BJ (cell line): ENCODE measurements at regions of chr6 and their contacts with region 1.

Region 1: DNA sequence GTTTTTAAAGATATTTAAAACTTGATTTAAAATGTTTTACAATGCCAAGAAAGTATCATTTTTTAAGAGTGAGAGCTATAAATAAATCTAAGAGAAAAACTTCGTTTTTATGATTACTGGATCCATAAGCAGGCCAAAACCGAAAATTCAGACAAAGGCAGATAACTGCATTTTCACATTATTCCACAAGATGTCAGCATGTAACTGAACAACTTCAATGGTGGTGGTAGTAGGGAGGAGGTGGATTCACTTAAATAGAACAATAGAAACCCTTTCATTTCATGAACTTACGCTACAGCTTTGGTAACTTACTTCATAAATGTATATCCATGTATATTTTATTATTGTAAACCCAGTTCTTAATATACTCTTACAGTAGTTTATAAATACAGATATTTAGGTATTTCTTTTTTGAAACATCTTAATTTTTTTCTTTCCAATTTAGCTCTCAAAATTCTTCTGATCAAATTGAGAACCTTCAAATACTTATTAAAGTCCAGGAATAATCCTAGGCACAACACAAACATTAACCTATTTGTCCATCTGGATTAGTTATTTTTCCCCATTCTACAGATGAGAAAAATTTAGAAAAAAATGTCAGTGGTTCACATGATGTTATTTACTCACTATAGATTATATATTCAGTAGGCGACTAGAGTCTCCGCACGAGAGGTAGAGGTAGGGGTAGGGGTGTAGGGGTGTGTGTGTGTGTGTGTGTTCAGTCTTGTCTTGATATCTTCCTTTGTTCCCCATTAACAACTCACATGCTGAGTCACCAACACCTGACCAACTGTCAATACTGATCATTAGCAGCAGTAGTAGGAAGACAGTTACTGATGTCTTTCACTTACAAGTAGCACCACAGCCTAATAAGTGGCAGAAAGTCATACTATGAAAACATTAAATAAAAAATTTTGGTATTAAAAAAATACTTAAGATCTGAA is 111.5 kb downstream of the ARHGAP18 start:
- DNase-seq: no peak
- H3K4me3 ChIP-seq: no peak overlapping the region
- H3K27me3 ChIP-seq: no peaks in the 10 kb centered on the region
- CTCF ChIP-seq: peak; percentile 62

Region 2: GRCh38 chr6:129525055-129525454 is 73.5 kb before region 1 on chr6:
- CTCF ChIA-PET with region 1: no interaction called
- POLR2A ChIA-PET with region 1: no interaction called
- DNase-seq: no peak
- H3K4me3 ChIP-seq: no peak overlapping the region
- H3K27me3 ChIP-seq: no peaks in the 10 kb centered on the region
- CTCF ChIP-seq: no peak

Region 3: GRCh38 chr6:129621247-129621646 is 22.7 kb after region 1 on chr6:
- CTCF ChIA-PET with region 1: no interaction called
- POLR2A ChIA-PET with region 1: no interaction called
- DNase-seq: no peak
- H3K4me3 ChIP-seq: no peak overlapping the region
- H3K27me3 ChIP-seq: no peaks in the 10 kb centered on the region
- CTCF ChIP-seq: no peak; the same call in 1 of the 2 replicates

Region 4: DNA sequence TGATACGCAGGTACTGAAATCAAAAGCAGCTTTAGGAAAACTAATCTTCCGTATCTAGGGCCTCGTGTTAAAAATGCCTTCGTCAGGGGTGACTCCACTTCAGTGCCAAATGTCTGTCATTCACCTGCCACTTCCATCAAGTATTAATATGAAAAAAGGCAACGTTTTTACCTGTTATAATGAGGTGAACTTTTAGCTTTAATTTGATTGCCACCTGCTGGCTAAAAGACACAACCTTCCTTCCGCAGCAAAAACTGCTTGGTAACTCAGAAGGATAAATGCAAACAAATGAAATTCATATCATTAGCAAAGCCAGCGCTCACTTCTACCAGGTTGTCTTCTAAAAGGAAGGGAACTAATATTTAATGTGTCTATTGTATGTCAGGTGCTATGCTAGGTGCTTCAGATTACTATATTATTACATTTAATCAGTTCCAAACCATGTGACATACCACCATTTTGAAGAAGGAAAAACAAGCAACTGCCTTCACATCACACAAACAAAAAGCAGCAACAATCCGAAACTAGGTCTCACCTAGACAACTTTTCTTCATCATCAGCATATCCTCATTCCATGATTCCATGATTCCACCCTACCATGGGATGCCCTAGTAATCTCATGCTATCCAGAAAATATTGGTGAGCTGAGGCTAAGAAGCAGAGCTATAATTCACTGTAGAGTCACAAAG is 132.1 kb after region 1 on chr6:
- CTCF ChIA-PET with region 1: interaction called, 50 read pairs
- POLR2A ChIA-PET with region 1: interaction called, 3 read pairs
- DNase-seq: no peak
- H3K4me3 ChIP-seq: no peak overlapping the region
- H3K27me3 ChIP-seq: no peaks in the 10 kb centered on the region
- CTCF ChIP-seq: peak; percentile 41

Region 5: GRCh38 chr6:129754750-129755149 is 156.2 kb after region 1 on chr6:
- CTCF ChIA-PET with region 1: interaction called, 14 read pairs
- POLR2A ChIA-PET with region 1: no interaction called
- DNase-seq: no peak
- H3K4me3 ChIP-seq: no peak overlapping the region
- H3K27me3 ChIP-seq: no peaks in the 10 kb centered on the region
- CTCF ChIP-seq: no peak

Region 6: GRCh38 chr6:129766959-129767728 is 168.6 kb after region 1 on chr6:
- CTCF ChIA-PET with region 1: interaction called, 11 read pairs
- POLR2A ChIA-PET with region 1: no interaction called
- DNase-seq: no peak
- H3K4me3 ChIP-seq: peak overlapping the region; percentile 35
- H3K27me3 ChIP-seq: 0 out of 2 replicates have a peak, but pooled peaks cover 5% of the 10 kb centered on the region
- CTCF ChIP-seq: no peak